ENCODE measurements at regions of chr16 and their contacts with region 1.

Region 1: DNA sequence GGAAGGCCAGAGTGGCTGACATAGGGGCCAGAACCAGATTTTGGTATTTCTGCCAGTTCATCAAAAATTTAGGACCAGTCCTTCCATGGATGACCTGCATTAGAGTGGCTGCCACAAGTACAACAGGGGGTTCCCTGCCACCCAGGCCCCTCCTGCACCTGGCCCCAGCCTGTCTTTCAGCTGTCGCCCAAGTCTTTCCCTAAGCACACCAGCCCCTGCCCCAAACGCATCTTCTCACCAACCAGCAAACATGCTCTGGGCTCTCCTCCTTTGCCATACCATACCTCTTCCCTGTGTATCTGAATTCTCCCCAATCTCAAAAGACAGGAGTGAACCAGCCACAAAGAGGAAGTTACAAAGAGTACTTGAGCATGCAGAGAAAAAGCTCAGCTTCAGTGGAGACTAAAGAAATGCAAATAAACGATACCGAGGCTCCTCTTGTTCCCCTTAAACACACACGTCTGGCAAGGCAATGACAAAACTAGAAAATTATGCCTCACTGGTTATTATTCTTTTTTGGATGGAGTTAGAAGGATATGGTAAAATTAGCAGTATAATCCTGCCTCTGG is 130.6 kb downstream of the DYNLRB2 start:
- DNase-seq: no peak
- H3K4me3 Mint-ChIP-seq: no peak overlapping the region
- H3K27ac Mint-ChIP-seq: no peak overlapping the region
- H3K4me1 Mint-ChIP-seq: peaks cover 35% of the 10 kb centered on the region
- H3K27me3 Mint-ChIP-seq: no peaks in the 10 kb centered on the region

Region 2: DNA sequence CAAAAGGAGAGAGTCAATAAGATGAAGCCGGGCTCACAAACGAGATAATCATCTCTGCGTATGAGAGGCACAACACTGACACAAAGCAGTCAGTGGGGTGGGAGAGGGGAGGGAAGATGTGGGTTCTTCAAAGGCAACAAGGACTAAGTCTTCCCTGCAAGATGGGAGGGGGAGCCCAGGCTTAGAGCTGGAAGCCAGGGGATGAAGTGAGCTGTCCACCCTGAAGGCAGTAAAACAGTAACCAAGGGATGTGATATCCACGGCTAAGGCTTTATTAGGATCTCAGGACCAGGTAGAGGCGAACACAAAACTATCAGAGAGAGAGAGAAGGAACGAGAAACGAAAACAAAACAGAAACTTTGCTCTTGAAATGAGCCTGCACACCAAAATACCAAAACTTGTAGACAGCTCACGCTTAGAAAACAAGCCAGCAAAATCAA is 14.6 kb before region 1 on chr16:
- CTCF ChIA-PET with region 1: no interaction called
- POLR2A ChIA-PET with region 1: interaction called, 3 read pairs
- intact Hi-C with region 1: loop called (anchors 1 kb)
- DNase-seq: peak; percentile 62
- H3K4me3 Mint-ChIP-seq: peak overlapping the region; percentile 73
- H3K27ac Mint-ChIP-seq: peak overlapping the region; percentile 76
- H3K4me1 Mint-ChIP-seq: peaks cover 29% of the 10 kb centered on the region
- H3K27me3 Mint-ChIP-seq: no peaks in the 10 kb centered on the region

Region 3: GRCh38 chr16:80691111-80691741 is 19.9 kb after region 1 on chr16:
- CTCF ChIA-PET with region 1: no interaction called
- POLR2A ChIA-PET with region 1: no interaction called
- intact Hi-C with region 1: loop called (anchors 2 kb)
- DNase-seq: no peak
- H3K4me3 Mint-ChIP-seq: no peak overlapping the region
- H3K27ac Mint-ChIP-seq: no peak overlapping the region
- H3K4me1 Mint-ChIP-seq: peaks cover 45% of the 10 kb centered on the region
- H3K27me3 Mint-ChIP-seq: no peaks in the 10 kb centered on the region

Region 4: DNA sequence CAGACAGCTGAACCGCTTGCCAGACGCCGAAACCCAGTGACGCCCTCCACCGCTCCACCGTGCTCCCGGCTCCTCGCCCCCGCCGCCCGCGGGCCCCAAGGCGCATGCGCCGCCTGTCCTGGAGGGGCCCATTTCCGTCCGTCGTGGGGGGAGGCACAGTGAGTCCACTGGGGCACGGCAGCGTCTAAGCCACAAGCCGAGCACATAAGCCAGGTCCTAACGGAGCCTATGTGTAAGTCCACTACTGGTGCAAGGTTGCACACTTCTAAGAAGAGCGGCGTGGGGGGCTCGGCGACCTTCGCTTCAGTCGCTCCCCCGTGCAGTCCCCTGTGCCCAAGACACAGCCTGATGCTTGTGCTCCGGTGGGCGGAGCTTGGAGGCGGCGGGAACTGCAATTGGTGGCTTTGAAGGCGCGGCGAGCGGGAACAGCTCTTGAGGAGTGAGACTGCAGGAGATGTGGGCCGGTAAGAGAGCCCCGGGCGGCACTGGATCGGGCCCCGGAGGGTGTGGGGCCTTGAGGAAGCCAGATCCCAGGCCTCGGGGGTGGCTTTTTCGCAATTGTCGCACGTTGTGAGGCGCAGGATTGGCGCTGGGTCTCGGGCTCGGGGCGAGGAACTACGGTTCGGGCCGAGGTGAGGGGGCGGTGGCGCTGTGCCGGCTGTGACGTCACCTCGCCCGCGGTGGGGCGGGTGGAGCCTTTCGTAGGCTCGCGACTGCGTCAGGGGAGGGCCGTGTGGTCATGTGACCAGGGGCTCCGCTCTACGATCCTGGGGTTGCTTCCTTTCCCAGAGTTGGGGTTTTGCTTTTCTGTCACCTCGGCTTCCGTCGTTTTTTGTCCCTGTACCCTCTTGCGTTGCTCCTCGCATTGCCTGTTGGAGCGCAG is 335.7 kb after region 1 on chr16 and contains the starts of genes CENPN and CMC2:
- CTCF ChIA-PET with region 1: no interaction called
- POLR2A ChIA-PET with region 1: no interaction called
- intact Hi-C with region 1: loop called (anchors 10 kb)
- DNase-seq: peak; percentile 98
- H3K4me3 Mint-ChIP-seq: peak within 1 kb of the TSS; percentile 88
- H3K27ac Mint-ChIP-seq: peak within 1 kb of the TSS; percentile 98
- H3K4me1 Mint-ChIP-seq: peaks cover 41% of the 10 kb centered on the region
- H3K27me3 Mint-ChIP-seq: no peaks in the 10 kb centered on the region
- total RNA-seq, gene CENPN: 71.9 to 76.0 TPM
- total RNA-seq, gene CMC2: 147 to 148 TPM